Activated CD4-positive, alpha-beta T cell treated with anti-CD3 and anti-CD28 coated beads for 36 hours (primary cell): ENCODE measurements at regions of chr15 and their contacts with region 1.

Region 1: DNA sequence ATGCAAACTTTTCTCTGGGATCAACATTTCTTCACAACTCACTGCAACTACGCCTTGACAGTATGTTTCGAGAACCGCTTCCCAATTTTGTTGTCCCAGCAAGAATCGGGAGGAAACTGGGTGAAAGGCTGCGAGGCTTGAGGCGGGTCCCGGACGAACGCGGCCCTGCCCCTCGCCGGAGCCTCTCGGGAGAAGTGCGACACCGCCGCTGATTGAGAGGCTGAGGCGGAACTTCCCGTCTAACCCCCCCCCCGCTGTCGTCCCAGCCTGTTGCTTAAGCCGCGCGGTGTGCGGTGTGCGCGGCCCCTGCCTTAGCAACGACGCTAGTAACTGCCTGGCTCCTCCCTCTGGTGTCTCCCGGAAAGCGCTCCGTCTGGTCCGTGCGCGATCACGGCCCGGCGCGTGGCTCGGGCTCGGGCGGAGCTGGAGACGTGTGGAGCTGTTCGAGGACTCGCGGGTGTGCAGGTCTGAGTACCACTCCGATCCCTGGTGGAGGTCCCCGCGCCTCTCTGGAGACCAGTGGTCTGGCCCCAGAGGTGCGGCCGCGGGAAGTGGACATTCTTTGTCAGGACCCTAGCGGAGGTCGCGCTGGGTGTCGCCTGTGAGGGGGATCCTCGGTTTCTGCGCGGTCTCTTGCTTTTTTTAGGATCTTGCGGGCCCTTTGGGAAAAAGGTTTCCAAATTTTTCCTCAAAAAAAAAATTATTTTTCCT is at the starts of genes DTWD1 and FAM227B:
- DNase-seq: peak; percentile 96
- ATAC-seq: peak; percentile 98
- H3K4me3 Mint-ChIP-seq: peak within 1 kb of the TSS; percentile 86
- H3K27ac Mint-ChIP-seq: peak within 1 kb of the TSS; percentile 88
- H3K4me1 Mint-ChIP-seq: peaks cover 36% of the 10 kb centered on the region
- H3K27me3 Mint-ChIP-seq: no peaks in the 10 kb centered on the region
- total RNA-seq, gene DTWD1: 20.4 to 22.4 TPM
- total RNA-seq, gene FAM227B: 2.7 to 4.4 TPM

Region 2: GRCh38 chr15:48330855-48331795 is 1289.7 kb before region 1 on chr15 and contains the start of gene DUT:
- CTCF ChIA-PET with region 1: no interaction called
- POLR2A ChIA-PET with region 1: no interaction called
- intact Hi-C with region 1: loop called (anchors 1 to 10 kb)
- DNase-seq: peak; percentile 89
- ATAC-seq: peak; percentile 84
- H3K4me3 Mint-ChIP-seq: peak within 1 kb of the TSS; percentile 82
- H3K27ac Mint-ChIP-seq: peak within 1 kb of the TSS; percentile 95
- H3K4me1 Mint-ChIP-seq: peaks cover 28% of the 10 kb centered on the region
- H3K27me3 Mint-ChIP-seq: no peaks in the 10 kb centered on the region
- total RNA-seq, gene DUT: 371 to 500 TPM

Region 3: GRCh38 chr15:49046220-49047102 is 574.4 kb before region 1 on chr15 and contains the start of gene SECISBP2L:
- CTCF ChIA-PET with region 1: no interaction called
- POLR2A ChIA-PET with region 1: no interaction called
- intact Hi-C with region 1: loop called in 1 of 2 experiments (anchors 5 kb)
- DNase-seq: peak; percentile 95
- ATAC-seq: peak; percentile 97
- H3K4me3 Mint-ChIP-seq: peak within 1 kb of the TSS; percentile 92
- H3K27ac Mint-ChIP-seq: peak within 1 kb of the TSS; percentile 84
- H3K4me1 Mint-ChIP-seq: peaks cover 22% of the 10 kb centered on the region
- H3K27me3 Mint-ChIP-seq: no peaks in the 10 kb centered on the region
- total RNA-seq, gene SECISBP2L: 22.4 to 36.8 TPM

Region 4: GRCh38 chr15:50182219-50183013 is 561.6 kb after region 1 on chr15:
- CTCF ChIA-PET with region 1: no interaction called
- POLR2A ChIA-PET with region 1: no interaction called
- intact Hi-C with region 1: loop called in 1 of 2 experiments (anchors 2 kb)
- DNase-seq: peak; percentile 73
- ATAC-seq: peak; percentile 68
- H3K4me3 Mint-ChIP-seq: peak overlapping the region; percentile 85
- H3K27ac Mint-ChIP-seq: peak overlapping the region; percentile 88
- H3K4me1 Mint-ChIP-seq: peaks cover 21% of the 10 kb centered on the region
- H3K27me3 Mint-ChIP-seq: peaks cover 27% of the 10 kb centered on the region

Region 5: DNA sequence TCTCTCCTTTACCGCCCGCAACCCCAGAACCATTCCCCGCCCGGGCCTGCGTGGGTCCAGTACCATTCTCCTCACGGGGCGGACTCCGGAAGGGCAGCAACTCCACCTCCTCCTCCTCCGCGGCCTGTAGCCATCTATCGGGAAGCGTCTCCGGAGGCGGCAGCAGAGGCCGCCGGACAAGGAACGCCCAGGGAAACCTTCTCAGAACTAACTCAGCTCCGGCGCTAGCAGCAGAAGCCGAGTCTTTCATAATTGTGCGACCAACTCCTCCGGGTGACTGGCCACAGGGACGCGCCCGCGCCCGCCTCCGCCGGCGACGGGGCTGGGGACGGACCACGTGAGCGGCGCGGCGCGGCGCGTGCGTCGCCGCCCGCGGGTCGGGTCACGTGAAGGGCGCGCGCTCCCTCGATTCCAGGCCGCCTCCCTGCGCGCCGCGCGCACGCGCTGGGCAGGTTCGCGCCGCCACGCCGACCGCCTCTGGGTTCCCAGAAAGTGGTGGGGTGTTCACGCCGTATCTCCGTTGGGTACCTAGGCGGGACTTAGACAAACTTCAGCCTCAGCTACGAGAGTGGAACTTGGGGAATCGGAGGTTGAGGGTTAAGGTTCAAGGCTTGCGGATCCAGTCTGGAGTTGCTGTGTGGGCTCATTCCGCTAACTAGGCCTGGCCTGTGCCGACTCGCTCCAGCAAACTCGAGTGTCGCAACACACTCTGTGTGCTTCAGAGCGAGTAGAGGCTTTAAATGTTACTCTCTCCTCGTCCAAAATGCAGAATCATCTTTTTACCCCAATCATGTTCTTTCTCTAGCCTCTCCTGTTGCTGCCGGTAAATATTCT is 1065.9 kb after region 1 on chr15 and contains the start of gene TRPM7:
- CTCF ChIA-PET with region 1: no interaction called
- POLR2A ChIA-PET with region 1: no interaction called
- intact Hi-C with region 1: loop called in 1 of 2 experiments (anchors 2 kb)
- DNase-seq: peak; percentile 95
- ATAC-seq: peak; percentile 79
- H3K4me3 Mint-ChIP-seq: peak within 1 kb of the TSS; percentile 99
- H3K27ac Mint-ChIP-seq: peak within 1 kb of the TSS; percentile 97
- H3K4me1 Mint-ChIP-seq: peaks cover 49% of the 10 kb centered on the region
- H3K27me3 Mint-ChIP-seq: no peaks in the 10 kb centered on the region
- total RNA-seq, gene TRPM7: 40.7 to 41.4 TPM